OCI-LY7 (cell line): ENCODE measurements at regions of chr14 and their contacts with region 1.

Region 1: DNA sequence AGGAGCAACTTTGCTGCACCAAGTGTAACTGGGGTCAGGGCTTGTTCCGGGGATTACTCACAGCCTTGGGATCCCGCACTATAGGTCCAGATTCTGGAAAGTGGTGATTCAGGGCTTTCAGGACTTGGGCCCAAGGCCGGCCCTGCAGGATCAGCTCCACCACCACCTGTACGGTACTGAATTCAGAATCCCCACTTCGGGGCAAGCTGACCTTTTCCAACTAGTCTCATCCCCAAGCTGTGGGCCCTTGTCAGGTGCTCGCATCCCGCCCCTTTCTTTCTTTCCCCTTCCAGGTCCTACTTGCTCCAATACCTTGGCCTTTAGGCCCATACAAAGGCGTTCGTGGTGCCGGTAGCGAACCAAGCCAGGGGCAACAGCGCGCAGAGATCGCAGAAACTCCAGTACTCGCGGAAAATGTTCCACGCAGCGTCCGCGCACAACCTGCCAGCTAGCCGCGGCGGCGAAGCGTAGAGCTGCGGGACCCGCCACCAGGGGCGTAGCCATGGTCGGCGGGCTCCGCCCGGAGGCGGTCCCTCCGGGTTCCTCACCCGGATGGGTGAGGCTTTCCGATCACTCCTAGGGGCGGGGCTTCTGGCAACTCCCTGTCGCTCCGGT is 487 bp downstream of the TINF2 start:
- DNase-seq: peak; percentile 96
- H3K4me3 ChIP-seq: peak overlapping the region; percentile 82
- H3K27ac ChIP-seq: peak overlapping the region; percentile 90
- H3K4me1 ChIP-seq: peaks cover 28% of the 10 kb centered on the region
- CTCF ChIP-seq: peak; percentile 35; the same call in 1 of the 2 replicates

Region 2: DNA sequence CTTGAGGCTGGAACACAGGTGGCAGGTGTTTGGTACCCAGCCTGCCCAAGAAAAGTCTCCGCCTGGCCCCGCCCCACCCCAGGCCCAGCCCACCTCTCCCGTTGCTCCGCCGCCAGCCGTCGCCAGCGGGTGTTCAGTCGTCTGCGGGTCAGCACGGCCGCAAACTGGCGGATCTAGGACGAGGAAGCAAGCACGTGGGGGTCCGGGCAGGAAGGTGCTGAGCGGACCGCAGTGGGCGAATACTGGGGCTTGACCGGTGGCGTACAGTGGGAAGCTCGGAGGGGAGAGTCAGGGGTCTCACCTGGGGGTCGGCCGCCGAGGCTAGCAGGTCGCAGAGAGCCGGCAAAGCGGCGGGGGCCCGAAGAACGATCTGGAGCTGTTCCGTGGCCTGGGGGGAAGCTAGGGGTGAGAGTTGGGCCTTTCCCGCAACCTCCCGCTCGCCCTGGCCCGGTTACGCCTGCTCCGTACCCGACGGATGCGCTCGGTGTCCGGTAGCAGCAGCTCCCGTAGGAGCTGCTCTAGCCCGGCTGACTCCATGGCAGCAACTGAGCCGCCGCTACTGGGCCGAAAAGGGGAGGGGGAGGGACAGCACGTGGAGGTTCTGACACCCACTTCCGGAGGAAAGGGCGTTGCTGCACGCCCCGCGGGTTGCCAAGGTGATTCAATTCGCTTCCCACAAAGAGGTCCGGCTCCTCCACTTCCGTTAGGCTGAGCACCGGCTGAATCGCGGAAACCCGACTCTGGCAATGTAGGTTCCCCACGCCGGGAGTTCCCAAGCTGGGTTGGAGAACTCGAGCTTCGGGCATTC is 53.5 kb before region 1 on chr14 and contains the start of gene IPO4:
- CTCF ChIA-PET with region 1: no interaction called
- POLR2A ChIA-PET with region 1: no interaction called
- intact Hi-C with region 1: loop called (anchors 2 kb)
- DNase-seq: peak; percentile 97
- H3K4me3 ChIP-seq: peak within 1 kb of the TSS; percentile 85
- H3K27ac ChIP-seq: peak within 1 kb of the TSS; percentile 26
- H3K4me1 ChIP-seq: peaks cover 16% of the 10 kb centered on the region
- CTCF ChIP-seq: no peak
- total RNA-seq, gene IPO4: 48.4 and 59.2 TPM in 2 replicates

Region 3: GRCh38 chr14:24271134-24271833 is 29.3 kb after region 1 on chr14 and contains the start of gene RABGGTA:
- CTCF ChIA-PET with region 1: interaction called, 5 read pairs
- POLR2A ChIA-PET with region 1: interaction called, 21 read pairs
- intact Hi-C with region 1: loop called (anchors 1 kb)
- DNase-seq: peak; percentile 97
- H3K4me3 ChIP-seq: peak within 1 kb of the TSS; percentile 84
- H3K27ac ChIP-seq: peak within 1 kb of the TSS; percentile 84
- H3K4me1 ChIP-seq: peaks cover 43% of the 10 kb centered on the region
- CTCF ChIP-seq: peak; percentile 80
- total RNA-seq, gene RABGGTA: 16.7 and 24.3 TPM in 2 replicates

Region 4: GRCh38 chr14:24307575-24308341 is 65.8 kb after region 1 on chr14 and contains the start of gene CIDEB:
- CTCF ChIA-PET with region 1: interaction called, 17 read pairs
- POLR2A ChIA-PET with region 1: interaction called, 11 read pairs
- intact Hi-C with region 1: no loop called
- DNase-seq: peak; percentile 67
- H3K4me3 ChIP-seq: no peak within 1 kb of the TSS
- H3K27ac ChIP-seq: no peak within 1 kb of the TSS
- H3K4me1 ChIP-seq: peaks cover 24% of the 10 kb centered on the region
- CTCF ChIP-seq: peak; percentile 98
- total RNA-seq, gene CIDEB: not detected in 2 replicates

Region 5: DNA sequence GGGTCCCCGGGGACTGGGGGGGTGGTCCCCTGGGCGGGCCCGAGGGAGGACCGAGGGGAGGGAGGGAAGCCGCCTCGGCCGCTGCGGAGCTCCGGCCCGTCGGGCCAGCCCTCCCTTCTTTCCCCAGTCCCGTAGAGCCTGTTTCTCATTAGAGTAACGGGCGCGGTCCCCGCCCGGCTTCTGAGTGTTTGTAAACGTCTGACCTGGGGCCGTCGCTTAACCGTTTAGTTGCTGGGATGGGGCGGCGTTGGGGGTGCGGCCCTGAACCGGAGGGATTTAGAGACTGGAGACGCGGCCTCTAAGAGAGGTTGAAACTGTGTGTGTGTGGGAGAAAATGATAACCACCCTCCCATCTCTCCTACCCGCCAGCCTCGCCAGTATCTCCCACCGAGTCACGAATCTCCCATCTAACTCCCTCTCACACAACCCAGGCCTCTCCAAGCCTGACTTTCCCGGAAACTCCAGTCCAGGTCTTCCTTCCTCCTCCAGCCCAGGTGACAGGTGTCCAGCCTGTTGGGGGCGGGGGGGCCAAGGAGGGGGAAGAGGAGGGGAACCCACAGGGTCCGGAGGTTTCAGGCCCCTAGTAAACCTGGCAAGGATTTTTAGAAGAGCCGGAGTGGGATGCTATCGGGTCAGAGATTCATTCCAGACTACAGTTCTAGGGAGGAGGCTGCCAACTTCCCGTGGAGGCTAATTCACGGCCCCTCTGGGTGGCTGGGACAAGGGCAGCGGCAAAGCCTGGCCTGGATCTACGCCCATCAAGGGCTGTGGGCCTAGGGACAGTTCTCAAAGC is 125.0 kb after region 1 on chr14:
- CTCF ChIA-PET with region 1: no interaction called
- POLR2A ChIA-PET with region 1: no interaction called
- intact Hi-C with region 1: loop called (anchors 2 kb)
- DNase-seq: peak; percentile 98
- H3K4me3 ChIP-seq: peak overlapping the region; percentile 91
- H3K27ac ChIP-seq: peak overlapping the region; percentile 93
- H3K4me1 ChIP-seq: peaks cover 29% of the 10 kb centered on the region
- CTCF ChIP-seq: no peak